Sciatic nerve (tissue), 2 donors: ENCODE measurements at regions of chr2 and their contacts with region 1.

Region 1: GRCh38 chr2:62550461-62550860 is 44.5 kb upstream of the TMEM17 start:
- DNase-seq: no peak
- ATAC-seq: no peak

Region 2: DNA sequence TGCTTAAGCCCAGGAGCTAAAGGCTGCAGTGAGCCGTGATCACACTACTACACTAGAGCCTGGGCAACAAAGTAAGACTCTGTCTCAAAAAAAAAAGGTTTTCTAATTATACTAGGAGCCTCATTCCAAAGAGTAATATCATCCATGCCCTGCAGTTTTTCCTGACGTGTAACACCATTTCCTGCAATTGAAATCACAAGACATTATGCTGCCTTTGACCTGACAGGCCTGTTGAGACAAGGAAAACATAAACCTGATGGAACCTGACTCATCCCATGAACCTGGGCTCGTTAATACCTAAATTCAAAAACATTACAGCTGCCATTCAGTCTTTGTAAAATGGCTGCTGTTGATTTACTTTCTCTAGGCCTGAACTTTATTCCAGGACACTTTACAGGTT is 1591.7 kb before region 1 on chr2:
- intact Hi-C with region 1: loop called (anchors 10 kb)
- DNase-seq: no peak
- ATAC-seq: no peak

Region 3: DNA sequence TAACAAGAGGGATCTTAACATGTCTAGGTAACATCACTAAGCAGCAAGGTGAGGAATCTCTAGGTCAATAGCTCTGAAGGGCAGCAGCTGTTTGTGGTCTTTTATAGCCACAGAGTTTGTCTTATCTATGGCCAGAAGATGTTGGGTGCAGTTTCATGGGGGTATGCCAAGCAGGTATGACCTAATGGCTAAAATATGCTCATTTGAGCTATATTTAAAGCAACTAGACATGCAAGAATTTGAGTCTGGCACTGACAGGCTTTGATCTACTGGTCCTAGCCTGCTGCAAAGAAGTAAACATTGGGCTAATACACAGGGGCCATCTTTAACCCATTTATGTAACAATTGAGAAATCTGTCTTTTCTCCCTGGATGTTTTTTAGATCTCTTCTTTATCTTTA is 1277.3 kb after region 1 on chr2:
- intact Hi-C with region 1: loop called (anchors 5 kb)
- DNase-seq: no peak
- ATAC-seq: peak; percentile 49